Activated T-helper 1 cell treated with anti-CD3 and anti-CD28 coated beads, Interleukin-12 subunit alpha, Interleukin-12 subunit beta, Interleukin-2, Interleukin-4 antibody, amounts not matched to agents 30 ng/mL and 10 ng/mL and 1 ng/mL, durations not matched to agents 14 hours and 24 hours and 36 hours (primary cell): ENCODE measurements at regions of chr19 and their contacts with region 1.

Region 1: DNA sequence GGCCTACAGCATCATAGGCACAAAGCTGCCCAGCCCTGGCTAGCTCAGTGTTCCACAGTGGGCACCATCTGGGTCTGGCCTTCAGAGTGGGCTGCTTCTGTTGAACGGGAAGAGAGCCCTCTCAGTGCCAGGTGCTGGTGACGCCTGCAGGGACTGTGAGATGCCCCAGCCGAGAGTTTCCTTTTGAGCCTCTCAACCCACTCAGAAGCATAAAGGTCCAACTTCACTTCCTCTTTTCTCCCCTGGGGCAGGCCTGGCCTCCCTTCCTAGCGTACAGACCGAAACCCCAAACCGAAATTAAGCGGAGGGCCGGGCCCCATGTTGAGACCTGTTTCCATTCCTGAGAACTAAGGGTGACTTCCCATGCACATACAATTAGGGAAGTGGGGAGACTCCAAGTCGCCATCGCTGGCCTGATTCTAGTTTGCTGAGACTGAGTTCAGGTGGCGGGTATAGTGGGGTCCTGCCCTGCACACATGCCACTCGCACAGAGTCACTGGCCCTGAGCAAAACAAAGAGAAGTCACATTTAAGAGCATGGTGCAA is 6.9 kb downstream of the RAB8A start:
- DNase-seq: peak; percentile 41
- H3K4me3 Mint-ChIP-seq: peak overlapping the region; percentile 70
- H3K27ac Mint-ChIP-seq: peak overlapping the region; percentile 95
- H3K4me1 Mint-ChIP-seq: peaks cover 51% of the 10 kb centered on the region
- H3K27me3 Mint-ChIP-seq: peaks cover 1% of the 10 kb centered on the region

Region 2: DNA sequence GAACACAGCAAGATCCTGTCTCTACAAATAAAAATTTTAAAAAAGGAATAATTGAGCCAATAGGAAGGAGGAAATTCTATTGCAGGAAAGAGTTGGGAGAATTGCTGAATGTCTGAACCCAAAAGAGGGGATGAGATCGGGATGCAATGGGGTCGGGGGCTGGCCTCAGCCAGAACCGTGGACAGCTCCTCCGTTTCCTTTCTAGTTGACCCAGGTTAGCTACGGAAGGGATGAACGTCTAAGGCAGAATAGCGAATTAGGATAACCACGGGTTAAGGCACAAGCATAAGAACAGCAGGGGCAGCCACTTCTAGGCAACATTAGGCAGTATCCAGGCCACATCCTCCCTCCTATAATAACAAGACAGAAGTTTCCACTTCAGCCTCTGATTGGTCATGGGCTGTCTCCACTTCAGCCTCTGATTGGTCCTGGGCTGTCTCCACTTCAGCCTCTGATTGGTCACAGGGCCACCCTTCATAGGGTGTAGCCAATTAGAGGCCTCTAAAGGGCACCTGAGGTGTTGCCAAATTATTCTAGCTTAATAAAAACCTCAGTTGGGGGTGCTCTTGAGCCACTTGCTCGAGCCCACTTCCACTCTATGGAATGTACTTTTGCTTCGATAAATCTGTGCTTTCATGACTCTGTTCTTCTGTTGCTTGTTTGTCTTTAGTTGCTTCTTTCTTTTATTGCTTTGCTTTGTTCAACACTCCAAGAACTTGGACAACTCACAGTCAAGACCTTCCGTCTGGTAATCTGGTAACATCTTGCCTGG is 67.1 kb before region 1 on chr19:
- intact Hi-C with region 1: no loop called
- DNase-seq: no peak
- H3K4me3 Mint-ChIP-seq: no peak overlapping the region
- H3K27ac Mint-ChIP-seq: no peak overlapping the region
- H3K4me1 Mint-ChIP-seq: no peaks in the 10 kb centered on the region
- H3K27me3 Mint-ChIP-seq: peaks cover 22% of the 10 kb centered on the region

Region 3: GRCh38 chr19:16143399-16144245 is 25.1 kb after region 1 on chr19 and contains the start of gene HSH2D:
- intact Hi-C with region 1: loop called (anchors 2 kb)
- DNase-seq: peak; percentile 78
- H3K4me3 Mint-ChIP-seq: peak within 1 kb of the TSS; percentile 98
- H3K27ac Mint-ChIP-seq: peak within 1 kb of the TSS; percentile 97
- H3K4me1 Mint-ChIP-seq: peaks cover 52% of the 10 kb centered on the region
- H3K27me3 Mint-ChIP-seq: no peaks in the 10 kb centered on the region
- total RNA-seq, gene HSH2D: 32.0 and 35.2 TPM in 2 replicates

Region 4: DNA sequence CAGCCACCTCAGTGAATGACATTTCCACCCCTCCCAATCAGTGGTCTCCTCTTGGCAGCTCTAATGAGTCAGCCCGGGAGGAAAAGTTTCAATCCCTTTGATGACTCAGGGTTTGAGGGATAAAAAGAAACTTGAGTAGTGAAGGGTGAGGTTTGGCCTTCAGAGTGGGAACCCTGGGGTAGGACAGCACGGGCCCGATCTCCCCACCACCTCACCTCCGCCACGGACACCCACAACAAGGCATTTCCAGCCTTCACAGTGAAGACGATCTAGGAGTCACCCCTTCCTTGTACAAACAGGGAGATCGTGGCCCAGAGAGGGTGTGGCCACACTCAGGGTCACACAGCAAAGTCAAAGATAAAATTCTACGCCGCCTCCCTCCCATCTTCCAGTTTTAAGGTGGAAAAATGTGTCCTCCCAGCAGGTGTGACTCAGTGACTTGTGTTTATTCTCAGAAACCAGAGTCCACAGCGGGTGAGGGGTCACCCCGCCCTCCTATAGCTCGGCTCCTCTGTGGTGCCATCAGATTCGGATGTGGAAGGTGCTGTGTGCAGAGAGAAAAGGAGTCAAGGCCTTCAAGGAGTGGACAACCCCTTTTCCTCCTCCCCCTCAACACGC is 42.5 kb after region 1 on chr19:
- intact Hi-C with region 1: loop called (anchors 1 kb)
- DNase-seq: no peak
- H3K4me3 Mint-ChIP-seq: peak overlapping the region; percentile 4
- H3K27ac Mint-ChIP-seq: peak overlapping the region; percentile 68
- H3K4me1 Mint-ChIP-seq: peaks cover 16% of the 10 kb centered on the region
- H3K27me3 Mint-ChIP-seq: peaks cover 2% of the 10 kb centered on the region

Region 5: DNA sequence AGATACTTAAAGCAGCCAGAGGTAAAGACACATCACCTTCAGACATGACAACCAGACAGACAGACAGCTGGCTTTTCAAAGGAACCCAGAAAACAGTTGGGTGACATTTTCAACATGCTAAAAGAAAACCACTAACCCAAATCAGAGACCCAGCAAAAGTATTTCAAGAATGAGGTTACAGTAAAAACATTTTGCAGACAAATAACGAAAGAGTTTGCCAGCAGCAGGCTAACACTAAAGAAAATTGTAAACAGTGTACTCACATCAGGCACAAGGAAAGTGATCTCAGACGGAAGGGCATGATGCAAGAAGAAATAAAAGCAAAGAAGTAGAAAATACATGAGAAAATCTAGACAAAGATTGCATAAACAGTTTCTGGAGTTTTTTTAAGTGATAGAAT is 125.5 kb after region 1 on chr19:
- intact Hi-C with region 1: no loop called
- DNase-seq: peak; percentile 16
- H3K4me3 Mint-ChIP-seq: peak overlapping the region; percentile 5
- H3K27ac Mint-ChIP-seq: peak overlapping the region; percentile 20
- H3K4me1 Mint-ChIP-seq: peaks cover 20% of the 10 kb centered on the region
- H3K27me3 Mint-ChIP-seq: peaks cover 8% of the 10 kb centered on the region

Region 6: GRCh38 chr19:16338470-16339360 is 220.2 kb after region 1 on chr19:
- intact Hi-C with region 1: loop called (anchors 2 kb)
- DNase-seq: peak; percentile 69
- H3K4me3 Mint-ChIP-seq: peak overlapping the region; percentile 76
- H3K27ac Mint-ChIP-seq: peak overlapping the region; percentile 95
- H3K4me1 Mint-ChIP-seq: peaks cover 65% of the 10 kb centered on the region
- H3K27me3 Mint-ChIP-seq: peaks cover 15% of the 10 kb centered on the region